ENCODE measurements at regions of chr22 and their contacts with region 1.

Region 1: GRCh38 chr22:31661851-31662656 is at the start of gene PISD:
- DNase-seq: peak; percentile 78
- ATAC-seq: peak; percentile 91
- H3K4me3 ChIP-seq: peak within 1 kb of the TSS; percentile 78 to 90
- H3K27ac ChIP-seq: peak within 1 kb of the TSS; percentile 88
- H3K4me1 ChIP-seq: peaks cover 8% of the 10 kb centered on the region
- H3K27me3 ChIP-seq: no peaks in the 10 kb centered on the region
- CTCF ChIP-seq: no peak
- total RNA-seq, gene PISD: 33.8 TPM

Region 2: DNA sequence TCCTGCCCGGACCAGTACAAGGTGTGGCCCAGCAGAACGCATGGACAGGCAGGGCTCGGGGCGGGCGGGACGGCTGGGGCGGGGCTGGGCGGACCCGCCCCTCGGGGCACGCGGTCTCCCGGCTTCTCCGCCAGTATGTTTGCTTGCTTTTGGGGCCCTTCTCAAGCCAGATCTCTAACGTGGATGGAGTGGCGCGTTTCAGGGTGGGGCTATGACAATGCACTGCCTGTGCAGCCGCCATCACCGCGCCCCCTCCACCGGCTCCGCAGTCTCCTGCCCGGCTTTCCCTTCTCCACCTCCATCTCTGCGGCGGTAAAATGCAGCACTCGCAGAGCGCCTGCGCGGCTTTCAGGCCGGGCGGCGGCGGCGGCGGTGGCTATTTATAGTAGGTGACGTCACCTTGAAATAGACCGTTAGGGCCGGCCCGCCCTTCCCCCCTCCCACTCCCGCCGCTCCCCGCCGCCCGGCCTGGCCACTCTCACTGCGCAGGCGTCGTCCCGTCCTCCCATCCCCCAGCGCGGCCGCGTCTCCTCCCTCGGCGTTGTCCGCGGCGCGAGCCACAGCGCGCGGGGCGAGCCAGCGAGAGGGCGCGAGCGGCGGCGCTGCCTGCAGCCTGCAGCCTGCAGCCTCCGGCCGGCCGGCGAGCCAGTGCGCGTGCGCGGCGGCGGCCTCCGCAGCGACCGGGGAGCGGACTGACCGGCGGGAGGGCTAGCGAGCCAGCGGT is 282.1 kb after region 1 on chr22 and contains the start of gene YWHAH:
- CTCF ChIA-PET with region 1: no interaction called
- POLR2A ChIA-PET with region 1: no interaction called
- in situ Hi-C with region 1: no loop called
- intact Hi-C with region 1: loop called (anchors 10 kb)
- DNase-seq: peak; percentile 42
- ATAC-seq: peak; percentile 89
- H3K4me3 ChIP-seq: peak within 1 kb of the TSS; percentile 78 to 91
- H3K27ac ChIP-seq: peak within 1 kb of the TSS; percentile 96
- H3K4me1 ChIP-seq: peaks cover 15% of the 10 kb centered on the region
- H3K27me3 ChIP-seq: no peaks in the 10 kb centered on the region
- CTCF ChIP-seq: no peak
- total RNA-seq, gene YWHAH: 138 TPM

Measured in Panc1 (cell line).